ENCODE measurements at regions of chr1 and their contacts with region 1.

Region 1: GRCh38 chr1:165597883-165598675 is 33.0 kb upstream of the MGST3 start:
- DNase-seq: peak; percentile 98
- ATAC-seq: peak; percentile 97
- H3K4me3 ChIP-seq: peak overlapping the region; percentile 76
- H3K27ac ChIP-seq: peak overlapping the region; percentile 73
- H3K4me1 ChIP-seq: peaks cover 12% of the 10 kb centered on the region
- H3K27me3 ChIP-seq: peaks cover 11% of the 10 kb centered on the region
- CTCF ChIP-seq: no peak

Region 2: GRCh38 chr1:165144757-165145397 is 453.2 kb before region 1 on chr1:
- CTCF ChIA-PET with region 1: no interaction called
- POLR2A ChIA-PET with region 1: no interaction called
- intact Hi-C with region 1: loop called (anchors 1 kb)
- DNase-seq: peak; percentile 90
- ATAC-seq: peak; percentile 99
- H3K4me3 ChIP-seq: no peak overlapping the region
- H3K27ac ChIP-seq: no peak overlapping the region
- H3K4me1 ChIP-seq: peaks cover 3% of the 10 kb centered on the region; the same call in 1 of the 2 replicates
- H3K27me3 ChIP-seq: peaks cover 26% of the 10 kb centered on the region
- CTCF ChIP-seq: peak; percentile 96

Region 3: DNA sequence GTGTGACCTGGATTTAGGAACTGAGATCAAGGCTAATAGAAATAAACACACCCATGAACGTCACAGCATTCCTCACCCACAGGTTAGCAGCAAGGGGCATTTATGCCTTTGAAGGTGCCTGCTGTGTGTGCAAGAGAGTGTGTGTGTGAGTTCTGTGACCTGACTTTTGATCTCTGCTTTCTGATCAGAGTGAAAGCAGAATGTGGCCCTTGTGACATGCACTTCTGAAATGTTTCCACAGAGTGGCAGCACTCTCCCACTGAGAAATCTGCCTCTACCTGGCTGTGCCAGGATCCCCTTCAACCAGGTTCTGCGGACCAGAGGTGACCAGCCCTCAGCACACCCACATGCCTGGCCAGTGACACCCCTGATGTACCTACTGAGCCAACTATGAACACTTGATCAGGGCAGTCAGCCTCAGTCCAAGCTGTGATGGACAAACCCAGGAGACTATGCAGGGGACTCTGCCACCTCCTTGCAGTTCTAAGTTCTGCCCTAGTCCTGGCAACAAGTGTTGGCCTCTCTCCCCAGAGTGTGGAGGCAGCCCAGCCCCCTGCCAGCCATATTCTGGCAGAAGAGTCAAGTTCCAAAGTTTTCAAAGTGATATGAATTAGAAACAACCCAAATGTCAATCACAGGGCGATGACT is 194.1 kb before region 1 on chr1:
- CTCF ChIA-PET with region 1: interaction called, 3 read pairs
- POLR2A ChIA-PET with region 1: no interaction called
- intact Hi-C with region 1: loop called (anchors 1 kb)
- DNase-seq: peak; percentile 68
- ATAC-seq: peak; percentile 89
- H3K4me3 ChIP-seq: no peak overlapping the region
- H3K27ac ChIP-seq: no peak overlapping the region
- H3K4me1 ChIP-seq: no peaks in the 10 kb centered on the region
- H3K27me3 ChIP-seq: no peaks in the 10 kb centered on the region
- CTCF ChIP-seq: peak; percentile 87

Region 4: GRCh38 chr1:165666152-165666825 is 68.2 kb after region 1 on chr1:
- CTCF ChIA-PET with region 1: no interaction called
- POLR2A ChIA-PET with region 1: no interaction called
- intact Hi-C with region 1: no loop called
- DNase-seq: no peak
- ATAC-seq: no peak
- H3K4me3 ChIP-seq: no peak overlapping the region
- H3K27ac ChIP-seq: no peak overlapping the region
- H3K4me1 ChIP-seq: no peaks in the 10 kb centered on the region
- H3K27me3 ChIP-seq: no peaks in the 10 kb centered on the region
- CTCF ChIP-seq: no peak

Region 5: GRCh38 chr1:165678509-165678908 is 80.4 kb after region 1 on chr1:
- CTCF ChIA-PET with region 1: no interaction called
- POLR2A ChIA-PET with region 1: no interaction called
- intact Hi-C with region 1: loop called (anchors 5 kb)
- DNase-seq: no peak
- ATAC-seq: no peak
- H3K4me3 ChIP-seq: no peak overlapping the region
- H3K27ac ChIP-seq: no peak overlapping the region
- H3K4me1 ChIP-seq: peaks cover 16% of the 10 kb centered on the region
- H3K27me3 ChIP-seq: no peaks in the 10 kb centered on the region
- CTCF ChIP-seq: no peak

Region 6: DNA sequence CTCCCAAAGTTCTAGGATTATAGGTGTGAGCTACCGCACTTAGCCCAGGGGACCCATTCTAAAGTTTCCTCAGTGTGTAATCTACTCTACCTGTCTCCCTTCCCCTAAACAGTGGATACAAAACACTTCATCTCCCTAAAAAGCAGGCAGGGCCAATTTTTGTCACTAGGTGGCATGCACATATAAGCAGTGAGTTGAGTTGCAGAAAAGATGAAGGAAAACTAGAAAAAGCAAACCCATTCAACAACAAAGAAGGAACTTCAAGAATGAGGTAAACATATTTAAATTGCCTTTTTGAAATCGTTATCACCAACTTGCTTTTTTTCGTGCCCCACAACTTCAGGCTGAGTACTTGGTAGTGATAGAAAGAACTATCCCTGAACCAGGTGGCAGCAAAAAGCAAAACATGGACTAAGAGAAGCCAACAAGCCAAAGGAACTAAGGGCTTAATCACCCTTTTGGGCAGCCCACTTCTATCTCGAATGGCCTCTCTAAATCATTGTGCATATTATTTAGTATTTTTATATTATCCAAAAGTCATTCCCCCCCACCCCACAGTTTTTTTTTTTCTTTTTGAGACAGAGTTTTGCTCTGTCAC is 119.9 kb after region 1 on chr1:
- CTCF ChIA-PET with region 1: no interaction called
- POLR2A ChIA-PET with region 1: no interaction called
- intact Hi-C with region 1: loop called (anchors 1 kb)
- DNase-seq: peak; percentile 82
- ATAC-seq: peak; percentile 92
- H3K4me3 ChIP-seq: no peak overlapping the region
- H3K27ac ChIP-seq: no peak overlapping the region
- H3K4me1 ChIP-seq: no peaks in the 10 kb centered on the region
- H3K27me3 ChIP-seq: no peaks in the 10 kb centered on the region
- CTCF ChIP-seq: peak; percentile 94

Region 7: GRCh38 chr1:165827268-165828102 is 229.4 kb after region 1 on chr1 and contains the start of gene UCK2:
- CTCF ChIA-PET with region 1: no interaction called
- POLR2A ChIA-PET with region 1: interaction called, 7 read pairs
- intact Hi-C with region 1: loop called (anchors 2 kb)
- DNase-seq: peak; percentile 89
- ATAC-seq: peak; percentile 82
- H3K4me3 ChIP-seq: peak within 1 kb of the TSS; percentile 88
- H3K27ac ChIP-seq: peak within 1 kb of the TSS; percentile 76
- H3K4me1 ChIP-seq: peaks cover 16% of the 10 kb centered on the region
- H3K27me3 ChIP-seq: no peaks in the 10 kb centered on the region
- CTCF ChIP-seq: no peak; the same call in 1 of the 2 replicates
- total RNA-seq, gene UCK2: 193 and 209 TPM in 2 replicates

Measured in PC-3 (cell line).